ENCODE measurements at regions of chr1 and their contacts with region 1.

Region 1: GRCh38 chr1:36155408-36156328 is at the start of gene MAP7D1:
- DNase-seq: peak; percentile 80
- ATAC-seq: peak; percentile 43
- H3K4me3 Mint-ChIP-seq: peak within 1 kb of the TSS; percentile 79
- H3K27ac Mint-ChIP-seq: no peak within 1 kb of the TSS
- H3K4me1 Mint-ChIP-seq: peaks cover 43% of the 10 kb centered on the region
- H3K27me3 Mint-ChIP-seq: peaks cover 37% of the 10 kb centered on the region
- CTCF ChIP-seq: no peak
- total RNA-seq, gene MAP7D1: 65.0 to 88.7 TPM (median 72.0 TPM) in 3 replicates

Region 2: DNA sequence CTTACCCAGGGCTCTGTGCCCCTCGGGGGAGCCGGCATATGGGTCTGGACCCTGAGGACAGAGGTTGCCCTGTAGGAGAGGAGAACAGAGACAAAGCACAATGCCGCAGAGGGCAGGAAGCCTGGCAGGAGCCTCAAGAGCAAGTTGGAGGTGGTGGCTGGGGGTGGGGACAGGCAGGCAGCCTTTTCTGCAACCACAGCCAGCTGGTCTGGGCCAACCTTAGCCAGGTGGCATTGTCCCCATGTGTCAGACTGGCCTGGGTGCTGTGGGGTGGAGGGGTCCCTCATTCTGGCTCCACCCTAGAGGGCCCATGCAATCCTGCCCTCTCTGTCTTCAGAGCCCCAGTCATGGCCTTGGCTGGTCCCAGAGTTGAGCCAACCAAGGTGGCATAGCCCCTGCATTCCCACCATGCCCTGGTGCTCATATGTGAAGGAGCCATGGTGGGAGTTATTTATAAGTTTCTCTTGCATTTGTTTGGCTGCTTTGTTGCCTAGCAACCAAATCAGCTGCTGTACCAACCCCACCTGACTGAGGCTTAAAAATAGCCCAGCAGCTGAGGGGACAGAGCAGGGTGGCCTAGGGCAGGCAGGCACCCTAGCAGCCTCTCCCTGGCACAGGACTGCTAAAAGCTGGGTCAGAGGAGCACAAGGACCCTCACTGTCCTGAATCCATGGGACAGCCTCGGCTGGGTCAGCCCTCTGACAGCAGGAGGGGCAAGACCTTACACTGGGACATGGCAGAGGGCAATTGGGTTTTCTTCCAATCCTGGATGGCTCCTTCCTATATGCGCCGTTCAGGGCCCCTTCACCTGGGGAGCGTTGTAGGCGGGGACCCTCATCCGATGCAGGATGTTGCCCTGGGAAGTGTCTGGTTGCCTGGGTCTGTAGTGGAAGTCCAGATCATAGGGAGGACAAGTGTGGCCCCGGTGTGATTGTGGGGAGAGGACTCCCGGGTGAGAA is 19.7 kb after region 1 on chr1:
- CTCF ChIA-PET with region 1: interaction called, 17 read pairs
- POLR2A ChIA-PET with region 1: interaction called, 20 read pairs
- DNase-seq: no peak
- ATAC-seq: no peak
- H3K4me3 Mint-ChIP-seq: peak overlapping the region; percentile 41
- H3K27ac Mint-ChIP-seq: no peak overlapping the region; the same call in 1 of the 2 replicates
- H3K4me1 Mint-ChIP-seq: peaks cover 22% of the 10 kb centered on the region
- H3K27me3 Mint-ChIP-seq: no peaks in the 10 kb centered on the region
- CTCF ChIP-seq: no peak